ENCODE measurements at regions of chr3 and their contacts with region 1.

Region 1: DNA sequence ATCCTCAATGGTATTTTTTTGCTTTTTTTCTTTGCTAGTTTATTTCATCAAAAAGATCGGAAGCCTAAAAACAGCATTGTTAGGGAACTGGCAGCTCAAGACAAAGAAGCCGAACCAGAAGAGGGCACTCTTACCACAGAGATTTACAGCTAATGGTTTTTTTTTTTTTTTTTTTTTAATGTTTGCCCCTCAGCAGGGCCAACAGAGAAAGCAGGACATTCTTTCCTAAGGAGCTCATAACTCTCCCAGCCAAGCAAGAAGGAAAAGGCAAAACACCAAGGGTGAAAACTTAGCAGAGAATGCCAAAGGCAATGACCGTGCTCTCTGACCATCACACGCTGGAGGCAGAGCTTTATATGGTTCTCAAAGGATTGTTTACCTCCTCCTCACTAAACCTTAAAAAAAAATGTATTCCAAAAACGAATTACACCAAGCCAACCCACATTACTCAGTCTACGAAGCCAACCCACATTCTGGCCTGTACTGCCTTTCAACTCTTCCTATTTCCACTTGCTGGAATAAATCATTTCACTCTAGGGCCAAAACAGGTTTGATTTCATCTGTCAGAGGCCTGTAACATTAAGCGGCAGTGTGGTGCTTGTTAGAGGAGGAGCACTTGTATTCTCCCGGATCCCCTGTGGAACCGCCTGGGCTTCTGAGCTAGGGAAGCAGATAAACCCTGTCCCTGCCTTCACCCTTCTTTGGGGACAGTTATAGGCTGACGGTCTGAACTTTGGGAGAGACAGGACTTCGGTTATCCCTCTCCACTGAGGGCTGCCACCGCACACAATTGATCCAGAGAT is 35.6 kb upstream of the GYG1 start:
- DNase-seq: peak; percentile 87
- H3K4me3 ChIP-seq: no peak overlapping the region
- H3K27ac ChIP-seq: no peak overlapping the region
- H3K4me1 ChIP-seq: peaks cover 4% of the 10 kb centered on the region
- H3K27me3 ChIP-seq: no peaks in the 10 kb centered on the region
- CTCF ChIP-seq: peak; percentile 41 to 64
- POLR2A ChIP-seq: no peak

Region 2: DNA sequence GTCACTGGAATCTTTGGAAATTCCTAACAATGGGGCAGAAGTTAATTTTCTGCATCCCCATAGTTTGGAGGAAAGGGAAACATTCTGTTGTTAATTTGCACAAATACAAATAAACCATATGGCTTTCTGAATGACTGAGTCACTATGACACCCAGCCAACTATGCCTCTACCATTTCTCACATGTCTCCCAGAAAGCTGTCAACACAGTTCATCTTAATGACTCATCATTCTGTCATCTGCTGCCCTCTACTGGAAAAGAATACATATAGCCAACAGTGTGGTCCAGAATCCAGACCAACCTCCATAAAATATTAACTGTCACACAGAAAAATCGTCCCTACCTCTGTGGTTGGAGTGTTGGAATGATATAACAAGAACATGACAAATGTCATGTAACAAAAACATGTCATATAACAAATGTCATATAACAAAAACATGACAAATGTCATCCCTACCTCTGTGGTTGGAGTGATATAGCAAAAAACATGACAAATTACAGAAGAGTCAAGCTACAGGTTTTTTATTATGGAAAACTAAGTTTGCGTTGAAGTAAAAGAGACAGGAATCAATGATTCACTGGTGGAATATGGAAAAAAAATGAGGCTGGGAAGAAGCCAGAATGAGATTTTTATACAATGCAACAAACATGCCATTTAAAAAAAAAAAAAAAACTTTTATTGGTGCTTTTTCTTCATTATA is 12.1 kb before region 1 on chr3:
- CTCF ChIA-PET with region 1: interaction called, 11 read pairs
- POLR2A ChIA-PET with region 1: no interaction called
- dilution Hi-C with region 1: no loop called
- intact Hi-C with region 1: no loop called
- DNase-seq: peak; percentile 89
- H3K4me3 ChIP-seq: no peak overlapping the region
- H3K27ac ChIP-seq: no peak overlapping the region
- H3K4me1 ChIP-seq: no peaks in the 10 kb centered on the region
- H3K27me3 ChIP-seq: peaks cover 3 to 14% of the 10 kb centered on the region in 2 experiments
- CTCF ChIP-seq: peak; percentile 52 to 60
- POLR2A ChIP-seq: no peak

Region 3: DNA sequence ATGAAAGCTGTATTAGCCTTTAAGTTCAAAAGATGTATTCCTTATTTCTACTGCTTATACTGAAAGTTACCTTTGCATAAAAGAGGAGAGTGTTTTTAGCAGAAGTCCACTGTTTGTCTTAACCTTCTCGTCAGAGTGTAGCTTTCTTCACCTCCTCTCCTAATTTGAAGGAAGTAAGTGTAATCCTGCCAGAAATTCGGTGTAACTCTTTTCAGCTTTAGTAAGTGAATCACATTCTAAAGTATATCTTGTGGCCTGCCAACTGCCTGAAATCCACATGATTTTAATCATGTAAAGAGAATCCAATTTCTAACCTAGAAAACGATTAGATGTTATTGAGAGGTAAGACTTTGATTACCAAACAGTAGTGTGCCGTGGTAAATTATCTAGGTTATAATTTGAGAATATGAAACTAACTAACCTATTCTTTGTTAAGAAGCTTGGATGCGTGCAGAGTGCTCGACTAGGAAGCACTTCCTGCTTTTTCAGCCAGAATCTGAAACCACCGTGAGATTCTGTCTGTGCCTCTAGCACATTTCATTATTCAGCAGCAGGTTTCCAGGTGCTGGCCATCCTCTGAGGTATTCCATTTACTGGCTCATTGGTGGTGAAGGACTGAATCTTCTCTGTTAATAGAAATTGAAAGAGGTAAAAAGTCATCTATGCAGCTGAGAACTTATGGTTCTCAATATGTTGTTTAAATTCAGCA is 43.1 kb after region 1 on chr3:
- CTCF ChIA-PET with region 1: interaction called, 17 read pairs
- POLR2A ChIA-PET with region 1: no interaction called
- dilution Hi-C with region 1: no loop called
- intact Hi-C with region 1: no loop called
- DNase-seq: no peak
- H3K4me3 ChIP-seq: no peak overlapping the region
- H3K27ac ChIP-seq: no peak overlapping the region
- H3K4me1 ChIP-seq: no peaks in the 10 kb centered on the region
- H3K27me3 ChIP-seq: no peaks in the 10 kb centered on the region
- CTCF ChIP-seq: no peak
- POLR2A ChIP-seq: no peak

Region 4: DNA sequence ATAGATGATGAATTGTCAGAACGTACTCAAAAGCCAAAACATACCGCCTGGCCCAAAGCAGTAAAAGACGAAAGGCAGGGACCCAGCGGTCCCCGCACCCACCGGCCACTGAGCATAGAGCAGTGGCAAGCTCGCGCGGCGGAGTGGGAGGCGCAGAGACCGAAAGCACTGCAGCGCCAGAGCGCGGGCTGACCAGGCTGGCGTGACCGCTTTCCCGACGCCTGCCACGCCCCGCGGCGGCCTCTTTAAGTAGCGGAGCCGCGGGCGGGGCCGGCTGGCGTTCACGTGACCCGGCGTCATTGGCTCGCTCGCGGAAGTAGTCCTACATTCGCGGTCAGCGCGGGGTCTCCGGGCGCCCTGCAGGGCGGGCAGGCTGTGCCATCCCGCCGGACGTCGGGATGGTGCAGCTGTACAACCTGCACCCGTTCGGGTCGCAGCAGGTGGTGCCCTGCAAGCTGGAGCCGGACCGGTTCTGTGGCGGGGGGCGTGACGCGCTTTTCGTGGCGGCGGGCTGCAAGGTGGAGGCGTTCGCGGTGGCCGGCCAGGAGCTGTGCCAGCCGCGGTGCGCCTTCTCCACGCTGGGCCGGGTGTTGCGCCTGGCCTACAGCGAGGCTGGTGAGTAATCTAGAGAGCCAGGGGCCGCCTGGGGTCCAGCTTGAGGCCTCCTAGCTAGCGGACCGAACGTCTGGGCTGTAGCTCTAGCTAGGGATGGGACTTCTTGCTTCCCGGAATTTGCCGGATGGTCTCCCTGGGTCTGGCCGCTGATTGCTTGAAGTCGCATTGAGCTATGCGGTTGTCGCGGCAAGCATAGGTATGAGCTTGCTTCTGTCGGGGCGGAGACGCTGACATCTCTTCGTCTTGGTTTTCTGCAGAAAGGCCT is 173.8 kb after region 1 on chr3 and contains the start of gene HPS3:
- CTCF ChIA-PET with region 1: interaction called, 15 read pairs
- POLR2A ChIA-PET with region 1: interaction called, 5 read pairs
- dilution Hi-C with region 1: no loop called
- intact Hi-C with region 1: no loop called
- DNase-seq: peak; percentile 91
- H3K4me3 ChIP-seq: peak within 1 kb of the TSS; percentile 53 to 85 (median 82)
- H3K27ac ChIP-seq: peak within 1 kb of the TSS; percentile 30
- H3K4me1 ChIP-seq: peaks cover 7% of the 10 kb centered on the region
- H3K27me3 ChIP-seq: peaks cover 0 to 1% of the 10 kb centered on the region in 2 experiments
- CTCF ChIP-seq: no peak
- POLR2A ChIP-seq: peak; percentile 91
- total RNA-seq, gene HPS3: 16.1 and 17.8 TPM in 2 replicates

Region 5: DNA sequence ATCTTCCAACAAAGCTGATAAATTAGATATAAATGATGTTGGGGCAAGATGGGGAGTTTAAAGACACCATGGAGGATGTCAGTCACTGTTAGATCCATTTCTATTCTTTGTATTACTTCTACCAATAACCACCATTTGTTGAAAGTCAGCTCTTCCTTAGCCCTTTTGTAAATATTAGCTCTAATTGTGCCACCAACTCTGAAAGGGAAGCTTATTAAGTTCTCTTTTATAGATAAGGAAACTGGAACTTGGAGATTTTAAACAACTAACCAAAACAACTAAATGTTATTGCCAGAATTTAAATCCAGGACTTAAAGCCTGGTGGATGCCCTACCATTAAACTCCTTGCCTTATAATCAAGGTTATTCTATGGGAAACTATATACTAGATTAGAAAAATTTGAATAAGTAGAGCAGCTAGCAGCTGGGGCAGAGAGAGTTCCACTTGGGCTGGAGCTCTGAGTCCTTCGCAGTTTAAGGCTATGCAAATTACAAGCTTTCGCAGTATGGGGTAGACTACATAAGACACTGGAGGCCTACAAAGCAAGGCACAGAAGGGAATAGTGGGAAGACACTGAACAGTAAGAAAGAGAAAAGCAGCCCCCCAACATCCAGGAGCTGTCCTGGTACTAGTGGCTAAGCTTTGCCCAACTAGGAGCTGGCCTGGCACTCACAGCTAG is 325.1 kb after region 1 on chr3:
- CTCF ChIA-PET with region 1: interaction called, 70 read pairs
- POLR2A ChIA-PET with region 1: no interaction called
- dilution Hi-C with region 1: no loop called
- intact Hi-C with region 1: no loop called
- DNase-seq: no peak
- H3K4me3 ChIP-seq: no peak overlapping the region
- H3K27ac ChIP-seq: no peak overlapping the region
- H3K4me1 ChIP-seq: peaks cover 3% of the 10 kb centered on the region
- H3K27me3 ChIP-seq: no peaks in the 10 kb centered on the region
- CTCF ChIP-seq: no peak
- POLR2A ChIP-seq: no peak

Region 6: DNA sequence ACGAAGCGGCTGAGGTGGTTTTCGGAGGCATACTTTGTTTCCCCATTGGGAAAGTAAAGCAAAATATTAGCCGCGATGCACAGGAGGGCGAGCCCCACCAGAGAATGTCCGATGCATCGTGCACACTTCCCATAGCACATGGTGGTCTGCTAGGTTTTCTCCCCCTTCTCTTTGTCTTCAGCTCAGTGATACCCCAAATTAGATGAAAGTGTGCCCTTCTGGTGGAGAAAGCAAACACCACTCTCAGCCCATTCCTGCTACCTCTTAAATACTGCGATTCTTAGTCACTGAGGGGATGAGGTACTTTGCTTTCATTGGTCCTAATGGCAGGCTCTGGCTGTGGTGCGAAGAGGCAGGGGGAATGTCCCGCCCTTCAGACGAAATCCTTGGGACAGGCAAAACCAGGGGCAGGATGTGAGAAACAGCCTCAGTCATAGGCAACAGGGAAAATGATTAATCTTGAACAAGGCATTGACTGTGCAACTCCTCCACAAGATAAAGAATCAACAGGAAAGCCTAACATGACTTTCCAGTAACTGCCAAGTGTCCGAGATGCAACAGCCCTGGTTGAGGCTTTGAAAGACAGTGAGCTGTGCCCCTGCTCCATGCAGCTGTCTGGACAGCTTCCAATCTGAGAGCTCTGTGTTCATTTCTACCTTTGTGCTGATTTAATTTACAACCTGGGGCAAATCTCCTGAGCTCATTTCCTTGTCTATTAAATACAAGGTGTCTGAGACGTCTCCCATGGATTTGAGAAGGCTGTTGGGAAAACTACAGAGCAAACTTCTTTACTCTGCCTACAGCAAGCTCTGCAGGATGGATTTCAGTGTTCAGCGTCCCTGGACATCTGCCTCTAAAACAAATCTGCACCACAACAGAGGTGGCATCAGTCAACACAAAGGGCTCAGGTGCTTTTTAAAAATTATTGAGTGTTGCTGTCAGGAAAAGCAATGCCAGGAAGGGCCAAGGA is 421.9 kb after region 1 on chr3 and contains the start of gene TM4SF1:
- CTCF ChIA-PET with region 1: interaction called, 17 read pairs
- POLR2A ChIA-PET with region 1: interaction called, 3 read pairs
- dilution Hi-C with region 1: no loop called
- intact Hi-C with region 1: loop called (anchors 10 kb)
- DNase-seq: peak; percentile 100
- H3K4me3 ChIP-seq: peak within 1 kb of the TSS; percentile 81 to 98 (median 93)
- H3K27ac ChIP-seq: peak within 1 kb of the TSS; percentile 90
- H3K4me1 ChIP-seq: peaks cover 45% of the 10 kb centered on the region
- H3K27me3 ChIP-seq: no peaks in the 10 kb centered on the region
- CTCF ChIP-seq: peak in 1 of 2 donors; percentile 4
- POLR2A ChIP-seq: peak; percentile 100
- total RNA-seq, gene TM4SF1: 559 and 619 TPM in 2 replicates